ENCODE measurements at regions of chr11 and their contacts with region 1.

Region 1: DNA sequence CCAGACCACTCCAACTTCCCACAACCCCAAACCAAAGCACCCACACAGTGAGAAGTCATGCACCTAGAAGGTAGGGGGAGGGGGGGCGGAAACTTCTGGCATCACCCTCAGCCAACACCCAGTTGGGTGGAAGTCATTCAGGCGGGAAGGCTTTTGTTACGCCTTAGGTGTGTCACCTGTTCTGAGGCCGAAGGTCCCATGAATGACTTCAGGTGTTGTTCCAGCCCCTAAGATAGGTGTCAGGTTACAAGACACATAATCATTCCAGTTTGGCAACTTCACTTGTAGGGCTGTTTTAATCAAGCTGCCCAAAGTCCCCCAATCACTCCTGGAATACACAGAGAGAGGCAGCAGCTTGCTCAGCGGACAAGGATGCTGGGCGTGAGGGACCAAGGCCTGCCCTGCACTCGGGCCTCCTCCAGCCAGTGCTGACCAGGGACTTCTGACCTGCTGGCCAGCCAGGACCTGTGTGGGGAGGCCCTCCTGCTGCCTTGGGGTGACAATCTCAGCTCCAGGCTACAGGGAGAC is at the start of gene TMPRSS4:
- DNase-seq: no peak
- H3K4me3 ChIP-seq: no peak within 1 kb of the TSS
- H3K27ac ChIP-seq: no peak within 1 kb of the TSS
- H3K4me1 ChIP-seq: peaks cover 4% of the 10 kb centered on the region
- CTCF ChIP-seq: no peak
- total RNA-seq, gene TMPRSS4: 0.03 TPM in 1 of 2 replicates, not detected in the other

Region 2: GRCh38 chr11:116461789-116462188 is 1615.0 kb before region 1 on chr11:
- CTCF ChIA-PET with region 1: no interaction called
- POLR2A ChIA-PET with region 1: no interaction called
- intact Hi-C with region 1: loop called (anchors 10 kb)
- DNase-seq: no peak
- H3K4me3 ChIP-seq: no peak overlapping the region
- H3K27ac ChIP-seq: no peak overlapping the region
- H3K4me1 ChIP-seq: no peaks in the 10 kb centered on the region
- CTCF ChIP-seq: no peak

Region 3: GRCh38 chr11:118117790-118118601 is 41.2 kb after region 1 on chr11:
- CTCF ChIA-PET with region 1: no interaction called
- POLR2A ChIA-PET with region 1: no interaction called
- intact Hi-C with region 1: no loop called
- DNase-seq: no peak
- H3K4me3 ChIP-seq: no peak overlapping the region
- H3K27ac ChIP-seq: no peak overlapping the region
- H3K4me1 ChIP-seq: no peaks in the 10 kb centered on the region
- CTCF ChIP-seq: no peak

Region 4: DNA sequence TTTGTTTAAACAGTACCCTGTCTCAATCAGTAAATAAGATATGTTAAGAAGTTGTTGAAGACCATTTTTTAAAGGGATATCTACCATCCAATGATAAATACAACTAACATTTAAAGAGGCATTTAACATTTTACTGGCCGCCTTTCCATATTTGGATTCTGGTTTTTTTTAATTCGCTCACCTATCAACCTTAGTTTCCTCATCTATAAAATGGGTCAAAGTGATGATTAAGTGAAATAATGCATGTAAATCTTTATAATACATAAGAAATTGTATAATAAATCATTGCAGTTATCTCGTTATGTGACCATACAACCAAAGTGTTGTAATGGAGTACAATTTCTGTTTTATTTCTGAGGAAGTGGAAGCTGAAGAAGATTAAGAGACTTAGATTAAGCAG is 306.8 kb after region 1 on chr11:
- CTCF ChIA-PET with region 1: no interaction called
- POLR2A ChIA-PET with region 1: no interaction called
- intact Hi-C with region 1: no loop called
- DNase-seq: no peak
- H3K4me3 ChIP-seq: no peak overlapping the region
- H3K27ac ChIP-seq: no peak overlapping the region
- H3K4me1 ChIP-seq: no peaks in the 10 kb centered on the region
- CTCF ChIP-seq: no peak

Measured in OCI-LY7 (cell line).